Activated naive CD4-positive, alpha-beta T cell treated with anti-CD3 and anti-CD28 coated beads for 36 hours (primary cell): ENCODE measurements at regions of chr1 and their contacts with region 1.

Region 1: DNA sequence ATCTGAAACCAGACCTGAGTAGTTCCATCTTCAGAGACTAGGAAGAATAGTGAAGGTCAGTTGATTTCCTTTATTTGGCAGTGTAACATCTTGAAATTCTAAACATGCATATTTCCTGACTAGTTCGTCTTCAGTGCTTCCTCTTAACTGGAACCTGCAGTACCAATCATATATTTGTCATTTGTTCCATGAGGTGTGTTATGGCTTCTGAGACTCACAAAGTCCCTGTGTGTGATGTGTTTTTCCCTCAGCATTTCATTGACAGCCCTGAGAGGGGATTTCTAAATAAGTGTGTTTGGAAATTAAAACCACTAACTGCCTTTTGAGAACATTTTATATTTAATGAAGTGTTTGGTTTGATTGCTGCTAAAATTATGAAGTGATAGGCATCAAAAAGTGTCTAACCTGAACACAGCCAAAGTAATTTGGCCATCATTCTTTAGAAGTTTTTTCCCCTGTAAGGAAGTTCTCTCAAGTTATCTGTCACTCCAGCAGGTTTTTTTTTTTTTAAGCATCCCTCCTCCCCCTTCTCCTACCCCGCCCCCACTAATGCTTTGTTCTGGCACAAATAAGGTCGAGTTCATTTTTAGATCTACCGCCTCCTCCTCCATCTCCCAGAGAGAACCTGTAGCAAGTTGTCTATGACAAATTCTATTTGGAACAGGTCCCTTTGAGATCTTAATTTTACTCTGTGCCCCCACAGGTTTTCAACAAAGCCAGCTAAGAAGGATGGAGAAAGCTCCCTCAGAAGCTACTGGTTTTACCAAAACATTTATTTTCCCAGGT is 61.4 kb downstream of the TMEM200B start:
- DNase-seq: peak; percentile 72
- H3K4me3 Mint-ChIP-seq: peak overlapping the region; percentile 55
- H3K27ac Mint-ChIP-seq: peak overlapping the region; percentile 99
- H3K4me1 Mint-ChIP-seq: peaks cover 53% of the 10 kb centered on the region
- H3K27me3 Mint-ChIP-seq: no peaks in the 10 kb centered on the region

Region 2: GRCh38 chr1:28668191-28668955 is 394.0 kb before region 1 on chr1 and contains the start of gene GMEB1:
- CTCF ChIA-PET with region 1: no interaction called
- intact Hi-C with region 1: loop called (anchors 1 kb)
- DNase-seq: peak; percentile 87
- H3K4me3 Mint-ChIP-seq: peak within 1 kb of the TSS; percentile 86
- H3K27ac Mint-ChIP-seq: peak within 1 kb of the TSS; percentile 96
- H3K4me1 Mint-ChIP-seq: peaks cover 11% of the 10 kb centered on the region
- H3K27me3 Mint-ChIP-seq: no peaks in the 10 kb centered on the region
- total RNA-seq, gene GMEB1: 15.8 to 16.3 TPM

Region 3: DNA sequence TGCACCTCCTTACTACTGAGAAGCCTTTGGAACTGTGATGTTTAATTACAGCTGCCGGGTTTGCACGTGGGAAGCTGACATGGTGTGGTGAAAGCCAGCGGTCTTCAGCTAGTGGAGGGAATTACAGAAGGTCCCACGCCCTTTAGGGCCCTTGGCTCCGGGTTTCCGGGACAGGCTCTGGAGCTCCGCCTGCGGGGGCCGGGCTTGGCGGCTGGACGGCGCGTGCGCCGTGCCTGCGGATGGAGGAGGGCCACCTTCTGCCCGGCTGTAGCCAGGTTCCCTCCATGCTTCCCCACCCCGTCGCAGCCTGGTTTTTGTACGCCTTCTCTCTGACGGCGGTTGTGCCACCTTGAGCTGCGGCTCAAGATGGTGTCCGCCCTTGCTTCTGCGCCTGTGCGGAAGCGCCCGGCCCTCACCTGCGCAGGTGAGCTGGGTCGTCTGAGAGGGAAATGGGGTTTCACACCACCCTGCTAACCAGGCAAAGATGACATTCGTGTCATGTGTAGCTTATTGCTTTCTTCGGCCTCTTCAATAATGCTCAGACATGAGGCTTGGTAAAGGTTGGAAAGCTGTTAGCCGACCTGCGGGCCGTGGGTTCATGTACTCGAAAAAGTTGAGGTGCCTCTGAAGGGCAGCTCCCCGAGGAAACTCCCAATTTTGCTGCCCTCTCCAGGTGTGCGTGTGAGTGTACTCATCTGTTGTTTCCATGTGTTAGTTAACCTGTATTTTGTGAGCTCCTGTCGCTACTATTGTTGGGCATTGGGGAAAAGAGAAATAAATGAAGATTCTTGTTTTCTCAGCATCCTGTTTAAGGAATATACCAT is 287.0 kb before region 1 on chr1:
- CTCF ChIA-PET with region 1: no interaction called
- intact Hi-C with region 1: no loop called
- DNase-seq: peak; percentile 72
- H3K4me3 Mint-ChIP-seq: peak overlapping the region; percentile 71
- H3K27ac Mint-ChIP-seq: peak overlapping the region; percentile 69
- H3K4me1 Mint-ChIP-seq: peaks cover 7% of the 10 kb centered on the region
- H3K27me3 Mint-ChIP-seq: no peaks in the 10 kb centered on the region

Region 4: GRCh38 chr1:28933277-28933676 is 129.1 kb before region 1 on chr1:
- CTCF ChIA-PET with region 1: no interaction called
- intact Hi-C with region 1: loop called (anchors 1 kb)
- DNase-seq: no peak
- H3K4me3 Mint-ChIP-seq: peak overlapping the region; percentile 52
- H3K27ac Mint-ChIP-seq: peak overlapping the region; percentile 74
- H3K4me1 Mint-ChIP-seq: peaks cover 73% of the 10 kb centered on the region
- H3K27me3 Mint-ChIP-seq: no peaks in the 10 kb centered on the region

Region 5: GRCh38 chr1:29043274-29043965 is 18.9 kb before region 1 on chr1:
- CTCF ChIA-PET with region 1: interaction called, 3 read pairs
- intact Hi-C with region 1: loop called (anchors 1 kb)
- DNase-seq: no peak
- H3K4me3 Mint-ChIP-seq: no peak overlapping the region
- H3K27ac Mint-ChIP-seq: peak overlapping the region; percentile 85
- H3K4me1 Mint-ChIP-seq: peaks cover 38% of the 10 kb centered on the region
- H3K27me3 Mint-ChIP-seq: no peaks in the 10 kb centered on the region